PC-9 (cell line): ENCODE measurements at regions of chr9 and their contacts with region 1.

Region 1: DNA sequence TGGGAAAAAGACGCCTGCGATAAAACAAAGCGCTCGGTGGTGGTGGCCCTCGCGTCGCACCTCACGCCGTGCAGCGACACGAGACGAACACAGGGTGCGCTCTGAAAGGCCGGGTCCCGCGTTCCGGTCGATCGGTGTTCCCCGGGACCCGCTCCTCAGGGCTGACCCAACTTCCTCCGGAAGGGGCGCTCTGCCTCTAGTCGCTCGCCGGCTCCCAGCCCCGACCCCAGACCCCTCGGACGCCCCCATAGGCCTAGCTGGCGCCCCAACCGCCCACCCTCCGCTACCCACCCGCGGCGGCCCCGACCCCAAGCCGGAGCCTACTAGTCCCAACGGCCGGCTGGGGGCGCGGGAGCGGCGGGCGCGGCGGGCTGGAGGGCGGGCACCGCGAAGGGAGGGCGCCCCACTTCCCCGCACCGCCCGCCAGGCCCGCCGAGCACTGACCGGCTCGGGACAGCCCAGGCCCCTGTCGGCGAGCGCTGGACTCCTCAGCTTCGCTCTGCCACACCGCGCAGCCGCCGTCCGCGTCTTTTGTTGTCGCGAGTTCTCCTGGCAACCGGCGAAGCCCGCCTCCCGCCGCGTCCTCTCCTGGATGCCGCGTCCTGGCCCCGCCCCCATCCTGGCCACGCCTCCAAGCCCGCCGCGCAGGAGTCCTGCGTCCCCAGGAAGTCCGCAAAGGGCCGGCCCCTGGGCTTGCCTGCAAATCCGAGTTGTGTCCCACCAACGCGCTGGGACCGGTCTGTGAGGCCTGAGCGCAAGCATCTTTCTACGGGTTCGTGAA is at the start of gene KIF27:
- DNase-seq: peak; percentile 91 to 100
- H3K4me3 ChIP-seq: peak within 1 kb of the TSS; percentile 56
- H3K27ac ChIP-seq: peak within 1 kb of the TSS; percentile 69
- H3K4me1 ChIP-seq: peaks cover 13% of the 10 kb centered on the region
- H3K27me3 ChIP-seq: no peaks in the 10 kb centered on the region
- CTCF ChIP-seq: no peak; the same call in 1 of the 2 replicates
- total RNA-seq, gene KIF27: 9.0 and 13.3 TPM in 2 replicates

Region 2: GRCh38 chr9:83622939-83623678 is 298.0 kb before region 1 on chr9 and contains the start of gene IDNK:
- CTCF ChIA-PET with region 1: no interaction called
- POLR2A ChIA-PET with region 1: no interaction called
- intact Hi-C with region 1: loop called (anchors 5 kb)
- DNase-seq: peak in 1 of 2 experiments; percentile 48
- H3K4me3 ChIP-seq: peak within 1 kb of the TSS; percentile 86
- H3K27ac ChIP-seq: peak within 1 kb of the TSS; percentile 25
- H3K4me1 ChIP-seq: peaks cover 9% of the 10 kb centered on the region
- H3K27me3 ChIP-seq: no peaks in the 10 kb centered on the region
- CTCF ChIP-seq: no peak
- total RNA-seq, gene IDNK: 1.7 and 4.6 TPM in 2 replicates

Region 3: DNA sequence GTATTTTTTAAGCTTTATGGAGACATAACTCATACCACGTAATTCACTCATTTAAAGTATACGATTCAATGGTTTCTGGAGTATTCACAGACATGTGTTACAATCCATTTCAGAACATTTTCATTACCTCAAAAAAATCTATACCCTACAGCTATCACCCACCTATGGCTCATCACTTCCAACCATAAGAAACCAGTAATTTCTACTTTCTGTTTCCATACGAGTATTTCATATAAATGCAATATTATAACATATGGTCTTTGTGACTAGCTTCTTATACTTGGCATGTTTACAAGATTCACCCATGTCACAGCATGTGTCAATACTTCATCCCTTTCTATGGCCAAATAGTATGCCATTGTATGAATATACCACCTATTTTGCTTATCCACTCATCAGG is 232.2 kb before region 1 on chr9:
- CTCF ChIA-PET with region 1: no interaction called
- POLR2A ChIA-PET with region 1: no interaction called
- intact Hi-C with region 1: no loop called
- DNase-seq: no peak
- H3K4me3 ChIP-seq: no peak overlapping the region
- H3K27ac ChIP-seq: no peak overlapping the region
- H3K4me1 ChIP-seq: no peaks in the 10 kb centered on the region
- H3K27me3 ChIP-seq: no peaks in the 10 kb centered on the region
- CTCF ChIP-seq: no peak

Region 4: GRCh38 chr9:83937911-83938323 is 16.8 kb after region 1 on chr9:
- CTCF ChIA-PET with region 1: no interaction called
- POLR2A ChIA-PET with region 1: interaction called, 5 read pairs
- intact Hi-C with region 1: loop called (anchors 1 kb)
- DNase-seq: peak; percentile 33 to 61
- H3K4me3 ChIP-seq: no peak overlapping the region
- H3K27ac ChIP-seq: no peak overlapping the region
- H3K4me1 ChIP-seq: peaks cover 23% of the 10 kb centered on the region
- H3K27me3 ChIP-seq: no peaks in the 10 kb centered on the region
- CTCF ChIP-seq: peak; percentile 84

Region 5: DNA sequence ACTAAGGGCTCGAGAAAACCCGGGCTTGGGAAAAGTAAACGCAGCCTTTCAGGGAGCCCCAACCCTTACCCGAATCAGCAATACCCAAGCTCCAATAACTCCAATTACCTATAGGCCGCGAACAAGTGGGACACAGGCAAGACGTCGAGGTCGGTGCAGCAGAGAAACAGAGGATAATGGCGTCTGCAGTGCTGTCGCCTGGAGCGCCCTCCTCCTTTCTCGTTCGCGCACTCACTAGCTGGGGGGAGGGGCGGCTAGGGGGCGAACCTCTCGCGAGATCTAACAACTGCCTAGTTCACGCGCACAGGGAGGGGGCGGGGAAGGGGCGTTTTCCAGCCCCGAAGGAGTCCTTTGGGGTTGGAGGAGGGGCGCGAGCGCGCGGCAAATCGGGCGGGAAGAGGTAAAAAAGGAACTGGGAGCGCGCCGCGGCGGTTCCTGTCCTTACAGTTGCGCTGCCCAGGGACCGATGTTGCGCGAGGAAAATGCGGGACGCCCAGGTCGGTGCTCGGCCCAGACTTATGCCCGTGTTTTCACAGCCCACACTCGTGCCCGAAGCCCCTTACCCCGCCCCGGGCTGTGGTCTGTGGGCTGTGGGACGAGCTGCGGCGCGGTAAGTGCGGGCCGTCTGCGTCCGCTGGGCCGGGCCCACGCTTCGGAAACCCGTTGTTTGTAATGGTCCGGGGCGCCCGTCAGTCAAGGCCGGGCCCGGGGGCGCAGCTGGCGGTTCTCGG is 59.4 kb after region 1 on chr9 and contains the start of gene RMI1:
- CTCF ChIA-PET with region 1: no interaction called
- POLR2A ChIA-PET with region 1: interaction called, 8 read pairs
- intact Hi-C with region 1: loop called (anchors 5 kb)
- DNase-seq: peak; percentile 91 to 97
- H3K4me3 ChIP-seq: peak within 1 kb of the TSS; percentile 98
- H3K27ac ChIP-seq: peak within 1 kb of the TSS; percentile 94
- H3K4me1 ChIP-seq: peaks cover 26% of the 10 kb centered on the region
- H3K27me3 ChIP-seq: no peaks in the 10 kb centered on the region
- CTCF ChIP-seq: no peak
- total RNA-seq, gene RMI1: 13.9 and 19.2 TPM in 2 replicates

Region 6: DNA sequence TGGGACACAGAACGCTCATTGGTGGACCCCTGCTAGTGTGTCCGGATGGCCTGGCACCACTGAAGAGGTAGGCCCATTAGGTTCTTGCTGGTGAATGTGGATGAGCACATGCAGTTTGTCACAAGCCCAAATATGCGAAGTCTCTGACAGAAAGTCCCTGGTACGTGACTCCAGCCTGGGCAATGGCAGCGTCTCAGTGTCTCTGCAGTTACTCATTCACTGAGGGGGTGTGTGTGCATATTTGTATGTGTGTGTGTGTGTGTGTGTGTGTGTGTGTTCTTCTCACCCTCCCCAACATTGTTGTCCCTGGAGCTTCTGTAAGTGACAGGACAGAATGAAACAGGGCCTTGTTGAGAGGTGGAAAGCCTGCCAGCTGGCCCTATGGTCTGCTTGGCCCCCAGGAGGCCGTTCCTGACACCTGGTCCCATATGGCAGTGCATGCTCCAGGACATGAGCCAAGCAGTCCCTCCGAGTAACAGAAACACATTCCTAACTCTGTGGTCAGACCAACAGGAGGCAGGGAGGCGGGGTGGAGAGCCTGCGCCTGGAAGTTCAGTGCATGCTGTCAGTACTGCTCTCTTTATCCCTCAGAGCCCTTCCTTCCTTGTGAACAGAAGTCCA is 249.5 kb after region 1 on chr9:
- CTCF ChIA-PET with region 1: no interaction called
- POLR2A ChIA-PET with region 1: no interaction called
- intact Hi-C with region 1: loop called (anchors 5 kb)
- DNase-seq: peak in 1 of 2 experiments; percentile 67
- H3K4me3 ChIP-seq: no peak overlapping the region
- H3K27ac ChIP-seq: no peak overlapping the region
- H3K4me1 ChIP-seq: no peaks in the 10 kb centered on the region
- H3K27me3 ChIP-seq: no peaks in the 10 kb centered on the region
- CTCF ChIP-seq: no peak

Region 7: GRCh38 chr9:84261082-84261746 is 340.1 kb after region 1 on chr9:
- CTCF ChIA-PET with region 1: interaction called, 4 read pairs
- POLR2A ChIA-PET with region 1: interaction called, 4 read pairs
- intact Hi-C with region 1: loop called (anchors 1 kb)
- DNase-seq: peak; percentile 72 to 77
- H3K4me3 ChIP-seq: no peak overlapping the region
- H3K27ac ChIP-seq: no peak overlapping the region
- H3K4me1 ChIP-seq: 0 out of 2 replicates have a peak, but pooled peaks cover 3% of the 10 kb centered on the region
- H3K27me3 ChIP-seq: no peaks in the 10 kb centered on the region
- CTCF ChIP-seq: peak; percentile 90

Region 8: DNA sequence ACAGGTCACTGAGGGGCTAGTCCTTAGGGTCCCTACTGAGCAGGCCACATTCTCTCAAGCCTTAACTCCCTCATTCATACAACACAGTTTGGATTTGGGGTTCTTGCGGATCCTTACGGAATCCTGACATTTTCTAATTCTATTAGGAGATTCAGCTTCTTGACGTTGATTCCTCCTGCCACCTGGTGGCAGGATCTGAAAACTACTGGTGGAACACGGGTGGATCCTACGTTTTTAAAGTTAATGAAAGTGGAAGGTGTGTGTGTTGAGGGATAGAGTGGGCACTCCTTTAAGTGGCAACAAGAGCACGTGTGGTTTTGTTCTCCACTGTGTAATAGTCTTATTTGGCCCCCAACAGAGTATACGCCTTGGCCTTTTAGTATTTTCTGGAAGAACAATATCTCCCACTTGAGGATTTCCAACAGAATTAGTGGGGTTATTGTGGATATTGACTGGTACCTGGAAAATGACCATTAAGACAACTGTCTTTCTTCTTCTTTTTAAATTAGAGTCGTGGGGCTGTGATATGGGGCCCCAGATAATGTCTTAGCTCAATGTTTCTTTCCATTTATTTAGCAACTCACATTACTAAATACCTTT is 394.3 kb after region 1 on chr9:
- CTCF ChIA-PET with region 1: no interaction called
- POLR2A ChIA-PET with region 1: no interaction called
- intact Hi-C with region 1: loop called (anchors 5 kb)
- DNase-seq: peak; percentile 38 to 52
- H3K4me3 ChIP-seq: no peak overlapping the region
- H3K27ac ChIP-seq: no peak overlapping the region
- H3K4me1 ChIP-seq: no peaks in the 10 kb centered on the region
- H3K27me3 ChIP-seq: no peaks in the 10 kb centered on the region
- CTCF ChIP-seq: peak; percentile 91